H1 (cell line): ENCODE measurements at regions of chr3 and their contacts with region 1.

Region 1: DNA sequence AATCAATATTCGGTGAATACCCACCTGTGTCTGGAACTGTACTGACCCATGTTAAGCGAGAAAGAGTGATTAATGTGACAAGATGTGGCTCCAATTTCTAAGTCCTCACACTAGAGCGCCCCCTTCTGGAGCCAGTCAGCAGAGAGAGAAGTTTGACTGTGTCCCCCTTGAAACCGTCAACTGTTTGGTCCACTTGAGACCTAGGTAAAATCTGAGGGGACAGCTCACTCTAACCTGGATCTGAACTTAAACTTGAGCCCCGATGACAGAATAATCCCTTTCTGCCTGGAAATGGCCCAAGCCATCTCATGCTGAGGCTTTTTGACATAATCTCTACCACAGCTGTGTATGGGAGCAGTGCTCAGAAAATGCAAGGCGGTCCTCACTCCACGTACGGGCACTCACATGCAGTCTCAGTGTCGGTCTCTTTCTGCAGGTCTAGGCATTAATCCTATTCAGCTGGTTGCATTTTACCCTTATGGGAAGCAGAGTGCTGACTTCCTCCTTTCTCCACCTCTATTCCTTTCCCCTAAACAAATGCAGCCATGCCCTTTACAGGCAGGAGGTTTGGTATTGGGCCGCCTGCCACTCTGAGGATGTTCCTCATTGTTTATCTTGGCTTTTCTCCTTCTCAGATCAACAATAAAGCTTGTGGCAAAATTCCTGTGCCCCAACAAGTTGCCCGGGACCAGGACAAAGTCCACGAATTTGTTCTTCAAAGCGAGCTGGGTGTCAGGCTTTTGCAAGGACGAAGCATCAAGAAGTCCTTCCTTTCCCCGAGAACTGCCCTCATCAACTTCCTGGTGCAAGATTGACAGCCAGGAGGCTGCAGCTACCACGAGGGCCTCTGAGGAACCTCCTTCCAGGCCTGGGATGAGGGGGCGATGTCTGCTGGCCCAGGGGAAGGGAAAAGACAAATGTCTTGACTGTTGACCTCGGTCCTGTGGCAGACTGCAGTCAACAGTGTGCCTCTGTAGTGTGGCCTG is 47.5 kb upstream of the LIMD1 start:
- DNase-seq: peak; percentile 13 to 90
- H3K4me3 ChIP-seq: no peak overlapping the region
- H3K27ac ChIP-seq: no peak overlapping the region
- H3K4me1 ChIP-seq: no peaks in the 10 kb centered on the region; a peak in 1 of 7 replicates
- H3K27me3 ChIP-seq: no peaks in the 10 kb centered on the region
- CTCF ChIP-seq: peak; percentile 57 to 89 (median 76)
- EP300 ChIP-seq: no peak
- POLR2A ChIP-seq: no peak
- RAD21 ChIP-seq: peak; percentile 57 to 69

Region 2: GRCh38 chr3:45507820-45508317 is 39.1 kb before region 1 on chr3:
- CTCF ChIA-PET with region 1: interaction called, 75 read pairs
- POLR2A ChIA-PET with region 1: interaction called, 3 read pairs
- DNase-seq: peak in 1 of 2 experiments; percentile 61
- H3K4me3 ChIP-seq: peak overlapping the region in 1 of 4 experiments; percentile 3; a peak in 1 of 8 replicates
- H3K27ac ChIP-seq: peak overlapping the region; percentile 37; the same call in 1 of the 2 replicates
- H3K4me1 ChIP-seq: peaks cover 11 to 32% (median 22%) of the 10 kb centered on the region in 4 experiments; a peak in 6 of 7 replicates
- H3K27me3 ChIP-seq: no peaks in the 10 kb centered on the region
- CTCF ChIP-seq: peak; percentile 39 to 55 (median 54)
- EP300 ChIP-seq: no peak
- POLR2A ChIP-seq: no peak
- RAD21 ChIP-seq: peak; percentile 22 to 47; a peak in 3 of 4 replicates

Region 3: DNA sequence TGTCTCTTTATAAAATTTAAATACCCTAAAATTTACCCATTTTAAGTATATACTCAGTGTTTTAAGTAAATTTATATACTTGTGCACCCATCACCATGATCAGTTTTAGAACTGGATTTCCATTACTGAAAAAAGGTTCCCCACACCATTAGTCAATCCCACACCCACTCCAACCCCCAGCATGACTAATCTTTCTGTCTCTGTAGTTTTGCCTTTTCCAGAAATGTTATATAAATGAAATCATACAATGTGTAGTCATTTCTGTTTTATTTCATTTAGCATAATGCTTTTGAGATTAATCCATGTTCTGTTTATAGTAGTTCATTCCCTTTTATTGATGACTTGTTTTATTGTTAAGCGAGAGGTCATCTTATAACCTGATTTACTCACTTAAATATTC is 18.6 kb before region 1 on chr3:
- CTCF ChIA-PET with region 1: interaction called, 67 read pairs
- POLR2A ChIA-PET with region 1: no interaction called
- DNase-seq: no peak
- H3K4me3 ChIP-seq: no peak overlapping the region
- H3K27ac ChIP-seq: no peak overlapping the region
- H3K4me1 ChIP-seq: no peaks in the 10 kb centered on the region
- H3K27me3 ChIP-seq: no peaks in the 10 kb centered on the region
- CTCF ChIP-seq: no peak
- EP300 ChIP-seq: no peak
- POLR2A ChIP-seq: no peak
- RAD21 ChIP-seq: no peak

Region 4: GRCh38 chr3:45567730-45568172 is 20.7 kb after region 1 on chr3:
- CTCF ChIA-PET with region 1: interaction called, 17 read pairs
- POLR2A ChIA-PET with region 1: interaction called, 3 read pairs
- DNase-seq: no peak
- H3K4me3 ChIP-seq: no peak overlapping the region
- H3K27ac ChIP-seq: no peak overlapping the region
- H3K4me1 ChIP-seq: peaks cover 3 to 19% (median 13%) of the 10 kb centered on the region in 4 experiments; a peak in 5 of 7 replicates
- H3K27me3 ChIP-seq: no peaks in the 10 kb centered on the region; a peak in 1 of 7 replicates
- CTCF ChIP-seq: no peak
- EP300 ChIP-seq: no peak
- POLR2A ChIP-seq: no peak
- RAD21 ChIP-seq: no peak

Region 5: GRCh38 chr3:45583021-45583851 is 36.2 kb after region 1 on chr3:
- CTCF ChIA-PET with region 1: interaction called, 16 read pairs
- POLR2A ChIA-PET with region 1: no interaction called
- DNase-seq: no peak
- H3K4me3 ChIP-seq: no peak overlapping the region
- H3K27ac ChIP-seq: no peak overlapping the region
- H3K4me1 ChIP-seq: peaks cover 0 to 5% (median 2%) of the 10 kb centered on the region in 4 experiments; a peak in 2 of 7 replicates
- H3K27me3 ChIP-seq: no peaks in the 10 kb centered on the region
- CTCF ChIP-seq: no peak
- EP300 ChIP-seq: no peak
- POLR2A ChIP-seq: no peak
- RAD21 ChIP-seq: no peak

Region 6: GRCh38 chr3:45665101-45665572 is 118.1 kb after region 1 on chr3:
- CTCF ChIA-PET with region 1: interaction called, 61 read pairs
- POLR2A ChIA-PET with region 1: interaction called, 3 read pairs
- DNase-seq: no peak
- H3K4me3 ChIP-seq: no peak overlapping the region
- H3K27ac ChIP-seq: no peak overlapping the region
- H3K4me1 ChIP-seq: no peaks in the 10 kb centered on the region
- H3K27me3 ChIP-seq: no peaks in the 10 kb centered on the region
- CTCF ChIP-seq: peak; percentile 94 to 99 (median 99)
- EP300 ChIP-seq: no peak
- POLR2A ChIP-seq: no peak
- RAD21 ChIP-seq: peak; percentile 69 to 79